ENCODE measurements at regions of chr10 and their contacts with region 1.

Region 1: GRCh38 chr10:124025660-124026588 is 67.5 kb downstream of the CHST15 start:
- DNase-seq: no peak
- ATAC-seq: peak; percentile 57
- H3K4me3 Mint-ChIP-seq: no peak overlapping the region
- H3K27ac Mint-ChIP-seq: no peak overlapping the region
- H3K4me1 Mint-ChIP-seq: peaks cover 11% of the 10 kb centered on the region
- H3K27me3 Mint-ChIP-seq: no peaks in the 10 kb centered on the region
- CTCF ChIP-seq: no peak

Region 2: GRCh38 chr10:124152916-124153826 is 127.2 kb after region 1 on chr10:
- CTCF ChIA-PET with region 1: no interaction called
- POLR2A ChIA-PET with region 1: no interaction called
- intact Hi-C with region 1: loop called (anchors 1 kb)
- DNase-seq: peak; percentile 28
- ATAC-seq: peak; percentile 68
- H3K4me3 Mint-ChIP-seq: no peak overlapping the region
- H3K27ac Mint-ChIP-seq: no peak overlapping the region
- H3K4me1 Mint-ChIP-seq: peaks cover 16% of the 10 kb centered on the region
- H3K27me3 Mint-ChIP-seq: no peaks in the 10 kb centered on the region
- CTCF ChIP-seq: no peak

Measured in activated B cell treated with CpG ODN at 0.5 μM for 24 hours (primary cell).